ENCODE measurements at regions of chr5 and their contacts with region 1.

Region 1: GRCh38 chr5:132490486-132491367 is at the start of gene IRF1:
- DNase-seq: no peak
- ATAC-seq: peak; percentile 80
- H3K4me3 ChIP-seq: peak within 1 kb of the TSS; percentile 98
- H3K27ac ChIP-seq: peak within 1 kb of the TSS; percentile 97
- H3K4me1 ChIP-seq: peaks cover 52% of the 10 kb centered on the region
- H3K27me3 ChIP-seq: no peaks in the 10 kb centered on the region
- CTCF ChIP-seq: 0 out of 6 replicates have a peak, but pooled peaks of 2 of the 3 experiments have one; percentile 3 to 7
- EP300 ChIP-seq: 0 out of 4 replicates have a peak, but pooled peaks of 1 of the 2 experiments have one; percentile 1
- POLR2A ChIP-seq: peak; percentile 94
- RAD21 ChIP-seq: 0 out of 2 replicates have a peak, but pooled peaks have one; percentile 0
- polyA plus RNA-seq, gene IRF1: 6.9 to 14.0 TPM

Region 2: DNA sequence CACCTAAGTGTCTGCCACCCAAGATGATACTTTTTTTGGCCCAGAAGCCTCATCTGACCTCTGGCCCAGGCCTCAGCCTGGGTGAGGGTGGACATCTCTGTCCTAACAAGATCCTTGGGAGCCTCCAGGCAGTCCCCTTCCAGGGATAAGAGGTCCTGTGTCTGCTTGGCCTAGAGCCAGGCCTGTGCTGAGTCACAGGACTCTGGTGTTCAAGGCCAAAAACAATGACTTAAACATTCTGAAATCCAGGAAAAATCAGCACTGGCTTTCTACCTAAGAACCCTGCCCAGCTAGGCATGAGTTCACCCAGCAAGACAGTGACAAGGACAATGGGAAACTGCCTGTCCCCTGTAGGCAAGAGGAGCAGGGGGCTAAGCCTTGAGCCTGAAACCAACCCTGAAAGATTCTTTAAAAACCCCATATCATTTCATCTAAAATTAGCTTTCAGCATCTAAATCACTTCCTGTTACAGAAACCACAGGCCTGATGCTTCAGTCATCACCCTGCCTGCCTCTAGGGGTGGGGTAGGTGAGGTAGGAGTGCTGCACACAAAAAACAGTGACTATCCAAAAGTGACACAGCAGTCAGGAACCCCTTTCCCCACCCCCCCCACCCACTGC is 387.3 kb before region 1 on chr5:
- CTCF ChIA-PET with region 1: no interaction called
- POLR2A ChIA-PET with region 1: no interaction called
- RAD21 ChIA-PET with region 1: no interaction called
- SMC1A ChIA-PET with region 1: no interaction called
- in situ Hi-C with region 1: no loop called
- intact Hi-C with region 1: loop called (anchors 2 kb)
- DNase-seq: peak; percentile 78
- ATAC-seq: peak; percentile 76
- H3K4me3 ChIP-seq: 0 out of 2 replicates have a peak overlapping the region, but pooled peaks have one; percentile 14
- H3K27ac ChIP-seq: peak overlapping the region; percentile 98
- H3K4me1 ChIP-seq: peaks cover 67% of the 10 kb centered on the region
- H3K27me3 ChIP-seq: no peaks in the 10 kb centered on the region
- CTCF ChIP-seq: peak in 2 of 3 experiments; percentile 16 to 28; a peak in 2 of 6 replicates
- EP300 ChIP-seq: peak; percentile 38 to 65; a peak in 2 of 4 replicates
- POLR2A ChIP-seq: peak; percentile 60; the same call in 1 of the 2 replicates
- RAD21 ChIP-seq: peak; percentile 39; the same call in 1 of the 2 replicates

Region 3: DNA sequence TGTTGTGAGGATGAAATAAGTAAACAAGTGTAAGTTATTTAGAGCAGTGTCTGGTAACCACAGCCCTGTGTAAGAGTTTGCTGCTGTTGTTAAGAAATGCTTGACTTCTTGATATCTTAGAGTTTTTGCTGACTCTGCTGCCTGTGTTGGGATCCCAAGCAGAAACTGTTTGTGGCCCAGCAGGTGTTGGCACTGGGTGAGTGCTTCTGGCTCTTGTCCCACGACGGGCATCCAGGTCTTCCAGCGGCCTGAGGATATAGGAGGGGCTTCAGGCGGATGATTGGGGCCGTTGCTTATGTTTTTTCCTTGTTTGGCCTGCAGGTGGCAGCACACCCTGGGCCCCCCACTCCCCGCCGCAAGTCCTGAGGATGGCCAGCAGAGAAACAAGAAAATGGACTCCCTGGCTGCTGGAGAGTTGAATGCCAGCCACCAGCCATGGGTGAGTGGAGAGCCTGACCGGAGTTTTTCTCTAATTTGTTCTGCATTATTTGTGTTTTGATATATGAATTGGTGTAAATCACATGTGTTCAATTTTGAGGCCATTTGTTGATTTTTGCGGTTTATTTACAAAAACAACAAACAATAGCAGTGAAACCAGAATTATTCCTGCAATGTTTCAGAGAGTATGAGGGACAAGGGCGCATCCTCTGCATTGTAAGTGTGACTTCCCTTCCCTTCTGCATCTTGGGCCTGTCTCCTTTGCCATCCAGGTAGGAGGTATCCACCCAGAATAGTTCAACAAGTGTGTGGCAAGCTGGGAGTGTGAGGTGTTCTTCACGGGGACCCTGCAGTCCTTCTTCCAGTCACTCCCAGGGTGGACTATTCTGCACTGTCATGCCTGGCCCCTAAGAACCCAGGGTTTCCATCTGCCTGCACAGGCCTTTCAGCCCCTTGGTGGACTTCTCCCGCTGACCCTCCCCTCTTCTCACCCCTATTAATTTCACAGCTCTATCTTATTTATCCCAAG is 70.9 kb before region 1 on chr5:
- CTCF ChIA-PET with region 1: interaction called, 184 read pairs
- POLR2A ChIA-PET with region 1: interaction called, 389 read pairs
- RAD21 ChIA-PET with region 1: interaction called, 453 read pairs
- SMC1A ChIA-PET with region 1: interaction called, 162 read pairs
- in situ Hi-C with region 1: no loop called
- intact Hi-C with region 1: loop called (anchors 1 kb)
- DNase-seq: no peak
- ATAC-seq: peak; percentile 50
- H3K4me3 ChIP-seq: peak overlapping the region; percentile 31; the same call in 1 of the 2 replicates
- H3K27ac ChIP-seq: peak overlapping the region; percentile 94
- H3K4me1 ChIP-seq: peaks cover 79% of the 10 kb centered on the region
- H3K27me3 ChIP-seq: no peaks in the 10 kb centered on the region
- CTCF ChIP-seq: peak; percentile 74 to 81 (median 80)
- EP300 ChIP-seq: no peak
- POLR2A ChIP-seq: no peak
- RAD21 ChIP-seq: peak; percentile 78

Region 4: GRCh38 chr5:132437604-132438266 is 53.0 kb before region 1 on chr5:
- CTCF ChIA-PET with region 1: interaction called, 184 read pairs
- POLR2A ChIA-PET with region 1: interaction called, 4 read pairs
- RAD21 ChIA-PET with region 1: interaction called, 453 read pairs
- SMC1A ChIA-PET with region 1: interaction called, 162 read pairs
- in situ Hi-C with region 1: no loop called
- intact Hi-C with region 1: no loop called
- DNase-seq: no peak
- ATAC-seq: peak; percentile 91
- H3K4me3 ChIP-seq: peak overlapping the region; percentile 18; the same call in 1 of the 2 replicates
- H3K27ac ChIP-seq: peak overlapping the region; percentile 62
- H3K4me1 ChIP-seq: peaks cover 28% of the 10 kb centered on the region
- H3K27me3 ChIP-seq: no peaks in the 10 kb centered on the region
- CTCF ChIP-seq: no peak
- EP300 ChIP-seq: no peak
- POLR2A ChIP-seq: peak; percentile 36; the same call in 1 of the 2 replicates
- RAD21 ChIP-seq: peak; percentile 19; the same call in 1 of the 2 replicates

Region 5: GRCh38 chr5:132473019-132473531 is 17.7 kb before region 1 on chr5:
- CTCF ChIA-PET with region 1: interaction called, 51 read pairs
- POLR2A ChIA-PET with region 1: interaction called, 178 read pairs
- RAD21 ChIA-PET with region 1: interaction called, 64 read pairs
- SMC1A ChIA-PET with region 1: interaction called, 63 read pairs
- in situ Hi-C with region 1: no loop called
- intact Hi-C with region 1: no loop called
- DNase-seq: no peak
- ATAC-seq: peak; percentile 84
- H3K4me3 ChIP-seq: no peak overlapping the region
- H3K27ac ChIP-seq: peak overlapping the region; percentile 68
- H3K4me1 ChIP-seq: peaks cover 38% of the 10 kb centered on the region
- H3K27me3 ChIP-seq: no peaks in the 10 kb centered on the region
- CTCF ChIP-seq: no peak
- EP300 ChIP-seq: no peak
- POLR2A ChIP-seq: peak; percentile 38; the same call in 1 of the 2 replicates
- RAD21 ChIP-seq: no peak